ENCODE measurements at regions of chr3 and their contacts with region 1.

Region 1: GRCh38 chr3:30667280-30667651 is 60.9 kb downstream of the TGFBR2 start:
- DNase-seq: no peak
- ATAC-seq: no peak
- H3K4me3 Mint-ChIP-seq: peak overlapping the region; percentile 19
- H3K27ac Mint-ChIP-seq: peak overlapping the region; percentile 82
- H3K4me1 Mint-ChIP-seq: peaks cover 93% of the 10 kb centered on the region
- H3K27me3 Mint-ChIP-seq: no peaks in the 10 kb centered on the region
- CTCF ChIP-seq: no peak

Region 2: DNA sequence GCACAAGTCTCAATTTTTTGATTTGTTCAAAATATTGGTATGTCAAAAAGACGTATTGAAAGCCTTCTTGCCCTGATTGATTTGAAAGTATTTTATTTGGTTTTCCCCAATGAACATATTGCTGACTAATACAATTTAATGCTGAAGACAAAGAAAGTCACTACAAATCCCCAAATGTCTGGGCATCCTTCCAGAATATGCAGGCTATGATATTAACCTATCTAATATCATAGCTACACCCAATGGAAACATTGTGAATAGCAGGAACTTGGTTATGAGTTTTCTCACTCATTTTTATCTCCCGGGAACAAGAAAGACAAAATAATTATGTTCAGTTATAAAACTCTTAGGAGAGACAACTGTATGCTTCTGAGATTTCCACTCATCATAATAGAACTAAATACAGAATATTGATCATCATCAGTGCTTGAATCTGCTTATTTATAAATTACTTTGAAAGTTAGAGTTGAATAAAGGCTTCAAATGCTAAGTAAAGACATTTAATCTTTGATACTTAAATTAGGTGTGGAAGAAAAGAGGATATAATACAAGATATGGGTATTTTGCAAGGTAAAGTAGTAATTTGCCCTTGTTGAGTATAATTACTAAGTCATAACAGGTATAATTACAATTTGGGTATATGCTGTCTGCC is 902.5 kb before region 1 on chr3:
- CTCF ChIA-PET with region 1: no interaction called
- POLR2A ChIA-PET with region 1: no interaction called
- intact Hi-C with region 1: no loop called
- DNase-seq: no peak
- ATAC-seq: no peak
- H3K4me3 Mint-ChIP-seq: no peak overlapping the region
- H3K27ac Mint-ChIP-seq: no peak overlapping the region
- H3K4me1 Mint-ChIP-seq: no peaks in the 10 kb centered on the region
- H3K27me3 Mint-ChIP-seq: no peaks in the 10 kb centered on the region
- CTCF ChIP-seq: no peak

Region 3: DNA sequence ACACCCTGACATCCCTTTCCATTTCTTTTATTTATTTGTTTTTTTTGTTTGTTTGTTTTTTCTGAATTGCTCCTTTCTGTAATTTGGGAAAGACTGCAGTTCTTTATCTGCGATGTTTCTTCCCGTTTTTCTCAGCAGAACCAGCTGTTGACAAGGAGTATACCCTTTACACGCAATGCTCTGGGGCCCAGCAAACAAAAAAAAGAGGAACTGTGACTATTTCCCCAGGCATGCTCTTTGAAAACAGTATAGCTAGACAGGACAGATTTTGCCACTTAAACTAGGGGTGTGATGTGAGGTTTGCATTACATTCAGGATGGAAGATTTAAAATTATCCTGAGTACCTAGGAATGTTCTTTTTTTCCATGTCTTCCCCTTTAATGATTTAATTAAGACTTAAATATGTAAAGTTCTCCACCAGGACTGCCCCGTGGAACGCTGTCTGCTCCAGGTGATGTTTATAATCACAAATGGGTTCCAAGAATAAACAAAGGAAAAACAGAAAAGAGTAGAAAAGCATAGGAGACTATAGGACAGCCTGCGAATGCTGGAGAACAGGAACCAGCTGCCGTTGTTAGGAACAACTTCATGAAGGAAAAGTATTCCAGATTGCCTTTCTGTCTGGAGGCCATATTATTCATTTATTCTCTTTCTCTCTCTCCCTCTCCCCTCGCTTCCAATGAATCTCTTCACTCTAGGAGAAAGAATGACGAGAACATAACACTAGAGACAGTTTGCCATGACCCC is 17.5 kb before region 1 on chr3:
- CTCF ChIA-PET with region 1: no interaction called
- POLR2A ChIA-PET with region 1: interaction called, 10 read pairs
- intact Hi-C with region 1: no loop called
- DNase-seq: no peak
- ATAC-seq: peak; percentile 67
- H3K4me3 Mint-ChIP-seq: peak overlapping the region; percentile 55
- H3K27ac Mint-ChIP-seq: peak overlapping the region; percentile 86
- H3K4me1 Mint-ChIP-seq: peaks cover 99% of the 10 kb centered on the region
- H3K27me3 Mint-ChIP-seq: no peaks in the 10 kb centered on the region
- CTCF ChIP-seq: no peak

Region 4: GRCh38 chr3:30681643-30682211 is 14.5 kb after region 1 on chr3:
- CTCF ChIA-PET with region 1: no interaction called
- POLR2A ChIA-PET with region 1: interaction called, 7 read pairs
- intact Hi-C with region 1: loop called (anchors 2 kb)
- DNase-seq: no peak
- ATAC-seq: no peak
- H3K4me3 Mint-ChIP-seq: no peak overlapping the region
- H3K27ac Mint-ChIP-seq: peak overlapping the region; percentile 82
- H3K4me1 Mint-ChIP-seq: peaks cover 71% of the 10 kb centered on the region
- H3K27me3 Mint-ChIP-seq: no peaks in the 10 kb centered on the region
- CTCF ChIP-seq: no peak

Measured in activated B cell treated with CpG ODN at 0.5 μM for 24 hours (primary cell).